ENCODE measurements at regions of chr5 and their contacts with region 1.

Region 1: GRCh38 chr5:181005791-181006190 is 17.1 kb downstream of the BTNL3 start:
- DNase-seq: no peak
- ATAC-seq: no peak
- H3K4me3 ChIP-seq: no peak overlapping the region
- H3K27ac ChIP-seq: no peak overlapping the region
- H3K4me1 ChIP-seq: no peaks in the 10 kb centered on the region
- H3K27me3 ChIP-seq: no peaks in the 10 kb centered on the region
- CTCF ChIP-seq: no peak
- POLR2A ChIP-seq: no peak

Region 2: GRCh38 chr5:180810210-180810958 is 195.4 kb before region 1 on chr5:
- in situ Hi-C with region 1: no loop called
- intact Hi-C with region 1: no loop called
- DNase-seq: peak; percentile 96
- ATAC-seq: peak; percentile 83 to 86
- H3K4me3 ChIP-seq: peak overlapping the region; percentile 74 to 94 (median 79)
- H3K27ac ChIP-seq: peak overlapping the region; percentile 94 to 100 (median 100)
- H3K4me1 ChIP-seq: peaks cover 48 to 52% of the 10 kb centered on the region in 2 donors
- H3K27me3 ChIP-seq: no peaks in the 10 kb centered on the region
- CTCF ChIP-seq: no peak
- POLR2A ChIP-seq: peak; percentile 75 to 85

Region 3: GRCh38 chr5:180935203-180935602 is 70.6 kb before region 1 on chr5:
- in situ Hi-C with region 1: loop called in 2 of 4 experiments (anchors 5 to 10 kb)
- intact Hi-C with region 1: no loop called
- DNase-seq: no peak
- ATAC-seq: no peak
- H3K4me3 ChIP-seq: no peak overlapping the region
- H3K27ac ChIP-seq: no peak overlapping the region
- H3K4me1 ChIP-seq: no peaks in the 10 kb centered on the region
- H3K27me3 ChIP-seq: no peaks in the 10 kb centered on the region
- CTCF ChIP-seq: no peak
- POLR2A ChIP-seq: no peak

Region 4: GRCh38 chr5:180950291-180950949 is 55.4 kb before region 1 on chr5:
- in situ Hi-C with region 1: loop called in 1 of 4 experiments (anchors 10 kb)
- intact Hi-C with region 1: loop called (anchors 2 kb)
- DNase-seq: no peak
- ATAC-seq: no peak
- H3K4me3 ChIP-seq: no peak overlapping the region
- H3K27ac ChIP-seq: no peak overlapping the region
- H3K4me1 ChIP-seq: no peaks in the 10 kb centered on the region
- H3K27me3 ChIP-seq: no peaks in the 10 kb centered on the region
- CTCF ChIP-seq: no peak
- POLR2A ChIP-seq: no peak

Region 5: GRCh38 chr5:181052672-181053487 is 47.1 kb after region 1 on chr5:
- in situ Hi-C with region 1: no loop called
- intact Hi-C with region 1: no loop called
- DNase-seq: no peak
- ATAC-seq: no peak
- H3K4me3 ChIP-seq: peak overlapping the region; percentile 33 to 55 (median 48)
- H3K27ac ChIP-seq: peak overlapping the region in 3 of 4 donors; percentile 39 to 60 (median 58)
- H3K4me1 ChIP-seq: peaks cover 0 to 3% of the 10 kb centered on the region in 2 donors
- H3K27me3 ChIP-seq: peaks cover 57 to 72% (median 64%) of the 10 kb centered on the region in 3 donors
- CTCF ChIP-seq: no peak
- POLR2A ChIP-seq: no peak

Measured in gastrocnemius medialis (tissue), 4 donors.